H1 (cell line): ENCODE measurements at regions of chr2 and their contacts with region 1.

Region 1: DNA sequence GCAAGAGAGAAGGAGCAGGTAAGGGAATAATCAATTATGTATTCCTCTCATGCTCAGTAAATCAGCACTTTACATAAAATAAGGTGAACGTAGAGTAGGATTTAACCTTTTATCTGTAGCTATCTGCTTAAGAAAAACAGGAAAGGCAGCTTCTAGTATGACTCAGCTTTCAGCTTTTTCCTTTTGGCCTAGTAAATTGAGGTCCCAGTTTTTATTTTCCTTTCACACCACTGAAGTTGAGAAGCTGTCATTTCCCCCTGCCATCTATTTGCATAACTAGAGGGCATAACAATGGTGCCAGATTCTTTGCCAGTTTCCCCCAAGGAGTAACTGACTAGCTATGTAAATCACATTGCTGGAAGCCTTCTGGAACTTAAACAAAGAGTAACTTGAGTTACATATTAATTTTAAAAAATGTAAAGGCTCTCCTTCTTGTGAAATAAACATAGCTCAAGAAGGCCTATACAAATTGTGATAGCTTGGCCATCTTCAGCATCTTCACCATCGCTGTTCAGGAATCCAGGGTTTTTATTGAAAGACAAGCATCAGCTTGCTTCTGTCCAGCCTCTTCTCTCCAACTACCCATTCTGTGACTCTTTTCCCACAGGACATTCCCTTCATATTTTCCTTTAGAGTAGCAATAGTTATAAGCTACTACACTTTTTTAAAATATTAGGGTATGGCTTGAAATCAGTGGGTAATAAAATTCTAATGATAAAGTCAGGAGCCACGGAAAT is 97.0 kb downstream of the KYNU start:
- DNase-seq: peak in 1 of 2 experiments; percentile 44
- H3K4me3 ChIP-seq: no peak overlapping the region; a peak in 1 of 8 replicates
- H3K27ac ChIP-seq: peak overlapping the region; percentile 26; the same call in 1 of the 2 replicates
- H3K4me1 ChIP-seq: peaks cover 5 to 22% (median 9%) of the 10 kb centered on the region in 4 experiments; a peak in 4 of 7 replicates
- H3K27me3 ChIP-seq: no peaks in the 10 kb centered on the region
- CTCF ChIP-seq: no peak
- EP300 ChIP-seq: no peak
- POLR2A ChIP-seq: no peak
- RAD21 ChIP-seq: peak in 1 of 2 experiments; percentile 8; a peak in 1 of 4 replicates

Region 2: DNA sequence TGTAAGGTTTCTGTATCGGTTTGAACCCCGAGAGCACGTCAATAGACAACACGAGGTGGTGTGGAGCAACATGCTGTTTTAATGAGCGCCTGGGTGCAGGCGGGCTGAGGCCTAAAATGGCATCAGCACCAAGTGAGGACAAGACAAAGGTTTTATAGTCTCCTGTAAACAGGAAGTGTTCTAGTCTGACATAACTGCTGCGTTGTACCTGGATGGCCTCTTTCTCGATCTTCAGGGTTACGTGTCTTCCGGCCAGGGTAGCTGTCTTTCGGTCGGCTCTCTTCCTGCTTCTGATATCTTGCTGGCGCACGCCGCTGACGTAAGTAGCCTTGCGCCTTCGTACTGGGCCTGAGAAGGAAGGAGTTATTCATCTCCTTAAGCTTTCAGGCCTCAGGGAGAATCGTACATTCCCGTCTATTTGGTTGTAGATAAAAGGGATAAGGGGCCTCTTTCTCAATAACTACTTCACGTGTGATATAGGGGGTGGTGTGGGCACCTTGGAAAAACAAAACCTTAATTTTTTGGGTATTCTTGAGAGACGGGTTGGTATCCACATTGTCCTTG is 43.5 kb before region 1 on chr2:
- CTCF ChIA-PET with region 1: no interaction called
- POLR2A ChIA-PET with region 1: no interaction called
- DNase-seq: no peak
- H3K4me3 ChIP-seq: no peak overlapping the region
- H3K27ac ChIP-seq: no peak overlapping the region
- H3K4me1 ChIP-seq: no peaks in the 10 kb centered on the region
- H3K27me3 ChIP-seq: no peaks in the 10 kb centered on the region; a peak in 1 of 7 replicates
- CTCF ChIP-seq: no peak
- EP300 ChIP-seq: no peak
- POLR2A ChIP-seq: no peak
- RAD21 ChIP-seq: no peak

Region 3: DNA sequence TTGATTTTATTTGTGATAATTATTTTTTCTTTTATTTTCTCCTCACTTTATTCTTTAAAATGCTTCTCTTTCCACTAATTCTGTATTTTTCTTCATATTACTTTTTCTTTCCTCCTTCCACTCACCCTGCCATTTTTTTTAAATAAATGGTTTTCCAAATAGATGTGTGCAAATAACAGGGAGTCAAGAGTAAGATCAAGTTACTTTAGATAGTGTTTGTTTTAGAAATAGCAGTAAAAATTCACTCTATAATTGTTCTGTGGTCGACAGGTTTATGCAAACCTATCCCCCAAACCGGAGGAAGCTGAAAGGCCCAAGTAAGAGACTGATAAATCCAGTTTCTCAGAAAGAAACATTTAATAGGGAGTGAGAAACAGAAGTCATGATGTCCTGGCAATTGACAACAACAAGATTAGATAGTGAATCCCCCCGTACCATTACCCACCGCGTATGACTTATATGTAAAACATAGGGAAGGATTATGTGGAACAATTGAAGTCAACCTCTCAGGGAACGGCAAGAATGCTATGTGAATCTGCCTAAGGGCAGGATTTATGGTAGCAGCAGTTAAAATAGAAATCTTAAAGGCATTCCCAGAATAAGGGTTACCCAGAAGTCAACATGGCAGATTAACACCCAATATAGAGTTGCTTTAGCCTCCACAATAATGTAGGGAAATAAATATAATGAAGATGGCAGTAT is 21.5 kb before region 1 on chr2:
- CTCF ChIA-PET with region 1: no interaction called
- POLR2A ChIA-PET with region 1: no interaction called
- DNase-seq: no peak
- H3K4me3 ChIP-seq: no peak overlapping the region
- H3K27ac ChIP-seq: no peak overlapping the region
- H3K4me1 ChIP-seq: no peaks in the 10 kb centered on the region
- H3K27me3 ChIP-seq: no peaks in the 10 kb centered on the region
- CTCF ChIP-seq: no peak
- EP300 ChIP-seq: no peak
- POLR2A ChIP-seq: no peak
- RAD21 ChIP-seq: no peak

Region 4: GRCh38 chr2:142989273-142990204 is 15.1 kb after region 1 on chr2:
- CTCF ChIA-PET with region 1: interaction called, 28 read pairs
- POLR2A ChIA-PET with region 1: interaction called, 3 read pairs
- DNase-seq: no peak
- H3K4me3 ChIP-seq: no peak overlapping the region
- H3K27ac ChIP-seq: no peak overlapping the region
- H3K4me1 ChIP-seq: no peaks in the 10 kb centered on the region
- H3K27me3 ChIP-seq: no peaks in the 10 kb centered on the region
- CTCF ChIP-seq: peak in 1 of 3 experiments; percentile 46; a peak in 1 of 4 replicates
- EP300 ChIP-seq: no peak
- POLR2A ChIP-seq: no peak
- RAD21 ChIP-seq: peak; percentile 55 to 68